WTC11 (cell line): ENCODE measurements at regions of chr5 and their contacts with region 1.

Region 1: DNA sequence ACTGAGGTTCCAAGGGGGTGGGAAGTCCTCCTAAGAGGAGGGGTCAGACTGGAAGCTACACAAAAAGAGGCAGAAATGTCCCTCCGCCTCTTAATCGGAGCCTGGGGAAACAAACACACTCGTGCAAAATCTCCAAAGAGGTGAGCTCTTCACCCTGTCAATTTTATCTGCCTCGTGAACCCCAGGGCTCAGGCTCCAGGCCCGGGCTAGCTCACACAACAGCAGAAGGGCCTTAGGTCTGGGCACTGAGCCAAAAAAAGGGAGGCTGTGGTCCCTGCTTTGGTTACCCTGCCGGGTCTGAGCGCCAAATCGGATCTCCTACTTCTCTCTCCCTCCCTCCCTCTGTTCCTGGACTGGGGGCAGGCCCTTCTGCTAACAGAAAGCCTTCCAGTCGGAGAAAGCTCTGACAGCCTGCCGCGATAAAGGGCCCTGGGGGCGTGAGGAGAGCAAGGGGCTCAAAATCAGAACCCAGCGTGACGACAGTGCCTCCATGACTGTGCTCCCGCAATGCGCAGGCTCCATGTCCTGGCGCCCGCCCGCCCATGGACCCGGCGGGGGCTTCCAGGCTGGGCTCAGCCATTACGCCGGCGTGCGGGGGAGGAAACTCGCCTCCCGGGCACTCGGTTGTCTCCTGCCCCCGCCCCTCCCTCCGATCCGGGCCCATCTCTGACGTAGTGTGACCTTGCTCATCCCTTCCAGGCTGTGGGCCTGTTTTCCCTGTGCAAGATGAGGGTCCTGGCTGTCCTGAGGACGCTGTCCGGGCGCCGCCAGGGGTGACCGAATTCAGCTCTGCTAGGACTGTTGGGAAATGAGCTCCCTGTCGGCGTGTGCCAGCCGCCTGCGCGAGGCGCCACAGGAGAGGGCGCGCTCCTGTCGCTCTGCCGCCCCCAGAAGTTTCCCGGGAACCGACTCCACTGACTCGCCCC is 865 bp upstream of the SLC22A4 start:
- DNase-seq: peak; percentile 77
- ATAC-seq: peak; percentile 57
- H3K4me3 Mint-ChIP-seq: peak overlapping the region; percentile 83
- H3K27ac Mint-ChIP-seq: peak overlapping the region; percentile 84
- H3K4me1 Mint-ChIP-seq: peaks cover 13% of the 10 kb centered on the region
- H3K27me3 Mint-ChIP-seq: peaks cover 38% of the 10 kb centered on the region
- CTCF ChIP-seq: no peak

Region 2: GRCh38 chr5:132272311-132273210 is 20.8 kb before region 1 on chr5:
- CTCF ChIA-PET with region 1: interaction called, 24 read pairs
- POLR2A ChIA-PET with region 1: no interaction called
- DNase-seq: peak; percentile 89
- ATAC-seq: peak; percentile 65
- H3K4me3 Mint-ChIP-seq: no peak overlapping the region
- H3K27ac Mint-ChIP-seq: peak overlapping the region; percentile 16; the same call in 1 of the 2 replicates
- H3K4me1 Mint-ChIP-seq: peaks cover 16% of the 10 kb centered on the region
- H3K27me3 Mint-ChIP-seq: peaks cover 2% of the 10 kb centered on the region; the same call in 1 of the 2 replicates
- CTCF ChIP-seq: peak; percentile 85

Region 3: GRCh38 chr5:132277971-132278911 is 15.1 kb before region 1 on chr5:
- CTCF ChIA-PET with region 1: interaction called, 24 read pairs
- POLR2A ChIA-PET with region 1: interaction called, 4 read pairs
- DNase-seq: peak; percentile 42
- ATAC-seq: peak; percentile 95
- H3K4me3 Mint-ChIP-seq: no peak overlapping the region
- H3K27ac Mint-ChIP-seq: peak overlapping the region; percentile 85
- H3K4me1 Mint-ChIP-seq: peaks cover 19% of the 10 kb centered on the region
- H3K27me3 Mint-ChIP-seq: peaks cover 13% of the 10 kb centered on the region
- CTCF ChIP-seq: no peak

Region 4: GRCh38 chr5:132321109-132321721 is 27.9 kb after region 1 on chr5:
- CTCF ChIA-PET with region 1: interaction called, 5 read pairs
- POLR2A ChIA-PET with region 1: interaction called, 10 read pairs
- DNase-seq: no peak
- ATAC-seq: peak; percentile 34
- H3K4me3 Mint-ChIP-seq: no peak overlapping the region
- H3K27ac Mint-ChIP-seq: peak overlapping the region; percentile 40
- H3K4me1 Mint-ChIP-seq: peaks cover 19% of the 10 kb centered on the region
- H3K27me3 Mint-ChIP-seq: no peaks in the 10 kb centered on the region
- CTCF ChIP-seq: no peak

Region 5: DNA sequence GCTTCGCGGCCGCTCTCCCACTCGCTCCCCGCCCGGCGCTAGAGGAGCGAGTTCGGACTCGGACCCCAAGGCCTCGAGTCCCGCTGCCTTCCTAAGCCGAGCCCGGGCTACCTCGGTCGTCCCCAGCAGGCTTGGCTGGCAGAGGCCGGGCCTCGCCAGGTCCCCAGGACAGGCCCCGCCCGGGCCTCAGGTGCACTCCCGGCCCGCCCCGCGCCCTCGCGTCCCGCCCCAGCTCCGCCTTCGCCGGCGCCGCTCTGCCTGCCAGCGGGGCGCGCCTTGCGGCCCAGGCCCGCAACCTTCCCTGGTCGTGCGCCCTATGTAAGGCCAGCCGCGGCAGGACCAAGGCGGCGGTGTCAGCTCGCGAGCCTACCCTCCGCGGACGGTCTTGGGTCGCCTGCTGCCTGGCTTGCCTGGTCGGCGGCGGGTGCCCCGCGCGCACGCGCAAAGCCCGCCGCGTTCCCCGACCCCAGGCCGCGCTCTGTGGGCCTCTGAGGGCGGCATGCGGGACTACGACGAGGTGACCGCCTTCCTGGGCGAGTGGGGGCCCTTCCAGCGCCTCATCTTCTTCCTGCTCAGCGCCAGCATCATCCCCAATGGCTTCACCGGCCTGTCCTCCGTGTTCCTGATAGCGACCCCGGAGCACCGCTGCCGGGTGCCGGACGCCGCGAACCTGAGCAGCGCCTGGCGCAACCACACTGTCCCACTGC is 76.3 kb after region 1 on chr5 and contains the start of gene SLC22A5:
- CTCF ChIA-PET with region 1: interaction called, 15 read pairs
- POLR2A ChIA-PET with region 1: interaction called, 8 read pairs
- DNase-seq: peak; percentile 80
- ATAC-seq: peak; percentile 96
- H3K4me3 Mint-ChIP-seq: peak within 1 kb of the TSS; percentile 69
- H3K27ac Mint-ChIP-seq: no peak within 1 kb of the TSS
- H3K4me1 Mint-ChIP-seq: peaks cover 9% of the 10 kb centered on the region
- H3K27me3 Mint-ChIP-seq: peaks cover 16% of the 10 kb centered on the region
- CTCF ChIP-seq: no peak
- total RNA-seq, gene SLC22A5: 3.6 to 4.9 TPM (median 4.4 TPM) in 3 replicates

Region 6: GRCh38 chr5:132446669-132447068 is 153.3 kb after region 1 on chr5:
- CTCF ChIA-PET with region 1: no interaction called
- POLR2A ChIA-PET with region 1: no interaction called
- DNase-seq: no peak
- ATAC-seq: no peak
- H3K4me3 Mint-ChIP-seq: no peak overlapping the region
- H3K27ac Mint-ChIP-seq: no peak overlapping the region
- H3K4me1 Mint-ChIP-seq: peaks cover 37% of the 10 kb centered on the region
- H3K27me3 Mint-ChIP-seq: no peaks in the 10 kb centered on the region; the same call in 1 of the 2 replicates
- CTCF ChIP-seq: no peak